Natural killer cell (primary cell): ENCODE measurements at regions of chr14 and their contacts with region 1.

Region 1: GRCh38 chr14:21868442-21869046 is 194.9 kb upstream of the OR4E1 start:
- DNase-seq: peak; percentile 60 to 86
- ATAC-seq: peak; percentile 91 to 100 (median 92)
- H3K4me3 ChIP-seq: no peak overlapping the region
- H3K4me3 Mint-ChIP-seq: no peak overlapping the region
- H3K27ac ChIP-seq: no peak overlapping the region
- H3K27ac Mint-ChIP-seq: peak overlapping the region; percentile 19 to 66
- H3K4me1 ChIP-seq: no peaks in the 10 kb centered on the region
- H3K4me1 Mint-ChIP-seq: peaks cover 30% of the 10 kb centered on the region in 2 donors
- H3K27me3 ChIP-seq: no peaks in the 10 kb centered on the region
- H3K27me3 Mint-ChIP-seq: no peaks in the 10 kb centered on the region
- CTCF ChIP-seq: peak; percentile 97

Region 2: GRCh38 chr14:21680072-21680471 is 188.5 kb before region 1 on chr14:
- intact Hi-C with region 1: no loop called
- DNase-seq: no peak
- ATAC-seq: no peak
- H3K4me3 ChIP-seq: no peak overlapping the region
- H3K4me3 Mint-ChIP-seq: no peak overlapping the region
- H3K27ac ChIP-seq: no peak overlapping the region
- H3K27ac Mint-ChIP-seq: no peak overlapping the region
- H3K4me1 ChIP-seq: no peaks in the 10 kb centered on the region
- H3K4me1 Mint-ChIP-seq: no peaks in the 10 kb centered on the region
- H3K27me3 ChIP-seq: no peaks in the 10 kb centered on the region
- H3K27me3 Mint-ChIP-seq: peaks cover 22 to 30% of the 10 kb centered on the region in 2 donors
- CTCF ChIP-seq: no peak

Region 3: GRCh38 chr14:21807975-21808374 is 60.6 kb before region 1 on chr14:
- intact Hi-C with region 1: no loop called
- DNase-seq: no peak
- ATAC-seq: no peak
- H3K4me3 ChIP-seq: no peak overlapping the region
- H3K4me3 Mint-ChIP-seq: no peak overlapping the region
- H3K27ac ChIP-seq: no peak overlapping the region
- H3K27ac Mint-ChIP-seq: no peak overlapping the region
- H3K4me1 ChIP-seq: no peaks in the 10 kb centered on the region
- H3K4me1 Mint-ChIP-seq: no peaks in the 10 kb centered on the region
- H3K27me3 ChIP-seq: no peaks in the 10 kb centered on the region
- H3K27me3 Mint-ChIP-seq: peaks cover 26 to 41% of the 10 kb centered on the region in 2 donors
- CTCF ChIP-seq: no peak

Region 4: DNA sequence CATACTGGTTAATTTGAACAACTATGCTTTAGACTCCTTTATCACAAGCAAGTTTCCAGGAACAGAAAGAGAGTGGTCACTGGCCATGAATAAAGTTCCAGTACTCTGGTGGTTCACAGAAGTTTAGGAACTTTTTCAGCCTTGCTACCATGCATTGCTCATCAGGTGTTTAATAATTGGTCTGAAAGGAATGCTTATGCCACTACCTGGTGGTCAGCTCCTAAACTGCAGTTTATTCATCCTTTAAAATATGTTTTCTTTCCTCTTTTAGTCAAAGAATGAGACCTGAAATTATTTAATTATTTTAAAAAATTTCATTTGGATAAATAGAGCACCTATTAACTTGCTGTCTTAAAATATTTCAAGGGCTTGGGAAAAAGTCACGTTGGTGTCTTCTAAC is 65.1 kb after region 1 on chr14:
- intact Hi-C with region 1: loop called (anchors 1 kb)
- DNase-seq: peak in 1 of 2 donors; percentile 62
- ATAC-seq: peak; percentile 49 to 83 (median 75)
- H3K4me3 ChIP-seq: no peak overlapping the region
- H3K4me3 Mint-ChIP-seq: no peak overlapping the region
- H3K27ac ChIP-seq: no peak overlapping the region
- H3K27ac Mint-ChIP-seq: no peak overlapping the region
- H3K4me1 ChIP-seq: no peaks in the 10 kb centered on the region
- H3K4me1 Mint-ChIP-seq: peaks cover 10 to 13% of the 10 kb centered on the region in 2 donors
- H3K27me3 ChIP-seq: no peaks in the 10 kb centered on the region
- H3K27me3 Mint-ChIP-seq: peaks cover 0 to 1% of the 10 kb centered on the region in 2 donors
- CTCF ChIP-seq: peak; percentile 84